ENCODE measurements at regions of chr3 and their contacts with region 1.

Region 1: GRCh38 chr3:139329345-139329850 is 14.4 kb upstream of the MRPS22 start:
- DNase-seq: peak; percentile 85
- H3K4me3 ChIP-seq: no peak overlapping the region
- H3K27ac ChIP-seq: no peak overlapping the region
- H3K4me1 ChIP-seq: no peaks in the 10 kb centered on the region
- H3K27me3 ChIP-seq: peaks cover 28% of the 10 kb centered on the region
- CTCF ChIP-seq: peak; percentile 99

Region 2: GRCh38 chr3:138417559-138417982 is 911.8 kb before region 1 on chr3:
- CTCF ChIA-PET with region 1: no interaction called
- POLR2A ChIA-PET with region 1: no interaction called
- intact Hi-C with region 1: loop called (anchors 5 kb)
- DNase-seq: peak; percentile 86
- H3K4me3 ChIP-seq: no peak overlapping the region
- H3K27ac ChIP-seq: no peak overlapping the region
- H3K4me1 ChIP-seq: no peaks in the 10 kb centered on the region
- H3K27me3 ChIP-seq: no peaks in the 10 kb centered on the region
- CTCF ChIP-seq: peak; percentile 92

Region 3: GRCh38 chr3:138941259-138941885 is 388.0 kb before region 1 on chr3:
- CTCF ChIA-PET with region 1: interaction called, 4 read pairs
- POLR2A ChIA-PET with region 1: no interaction called
- intact Hi-C with region 1: loop called (anchors 1 kb)
- DNase-seq: peak; percentile 65
- H3K4me3 ChIP-seq: no peak overlapping the region
- H3K27ac ChIP-seq: no peak overlapping the region
- H3K4me1 ChIP-seq: no peaks in the 10 kb centered on the region
- H3K27me3 ChIP-seq: peaks cover 98% of the 10 kb centered on the region
- CTCF ChIP-seq: peak; percentile 80

Region 4: GRCh38 chr3:139111392-139112229 is 217.8 kb before region 1 on chr3:
- CTCF ChIA-PET with region 1: interaction called, 18 read pairs
- POLR2A ChIA-PET with region 1: no interaction called
- intact Hi-C with region 1: loop called (anchors 2 kb)
- DNase-seq: peak; percentile 60
- H3K4me3 ChIP-seq: no peak overlapping the region
- H3K27ac ChIP-seq: no peak overlapping the region
- H3K4me1 ChIP-seq: no peaks in the 10 kb centered on the region
- H3K27me3 ChIP-seq: peaks cover 5% of the 10 kb centered on the region
- CTCF ChIP-seq: peak; percentile 82